Left ventricle myocardium superior (tissue), 1 donor: ENCODE measurements at regions of chr5 and their contacts with region 1.

Region 1: DNA sequence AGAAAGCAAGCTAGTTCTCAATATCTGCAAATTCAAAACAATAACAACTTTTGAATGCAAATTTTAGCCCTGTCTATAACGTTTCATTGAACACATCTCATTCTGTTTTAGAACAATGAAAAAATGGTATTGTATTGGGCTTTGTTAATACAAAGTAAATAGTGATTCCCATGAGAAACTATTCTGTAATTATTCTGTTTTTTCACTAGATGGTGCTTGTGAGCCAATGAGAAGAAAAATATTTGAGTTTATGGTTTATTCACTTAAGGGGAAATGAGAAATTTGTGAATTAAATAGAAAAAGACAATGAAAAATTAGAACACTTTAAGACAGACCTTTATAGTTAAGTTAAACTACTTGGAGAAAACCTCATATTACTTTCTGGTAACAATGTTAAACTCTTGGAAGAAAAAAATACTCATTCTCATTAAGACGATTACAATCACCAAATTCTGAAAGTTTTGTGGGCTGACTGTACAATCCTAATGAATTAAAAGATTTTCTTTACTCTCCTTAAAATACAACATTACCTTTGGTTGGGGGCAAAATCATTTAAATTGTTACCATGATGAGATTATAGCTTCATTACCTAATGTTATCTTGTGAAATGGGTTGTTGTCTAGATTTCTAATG is 127.0 kb downstream of the NNT start:
- DNase-seq: no peak
- ATAC-seq: no peak

Region 2: DNA sequence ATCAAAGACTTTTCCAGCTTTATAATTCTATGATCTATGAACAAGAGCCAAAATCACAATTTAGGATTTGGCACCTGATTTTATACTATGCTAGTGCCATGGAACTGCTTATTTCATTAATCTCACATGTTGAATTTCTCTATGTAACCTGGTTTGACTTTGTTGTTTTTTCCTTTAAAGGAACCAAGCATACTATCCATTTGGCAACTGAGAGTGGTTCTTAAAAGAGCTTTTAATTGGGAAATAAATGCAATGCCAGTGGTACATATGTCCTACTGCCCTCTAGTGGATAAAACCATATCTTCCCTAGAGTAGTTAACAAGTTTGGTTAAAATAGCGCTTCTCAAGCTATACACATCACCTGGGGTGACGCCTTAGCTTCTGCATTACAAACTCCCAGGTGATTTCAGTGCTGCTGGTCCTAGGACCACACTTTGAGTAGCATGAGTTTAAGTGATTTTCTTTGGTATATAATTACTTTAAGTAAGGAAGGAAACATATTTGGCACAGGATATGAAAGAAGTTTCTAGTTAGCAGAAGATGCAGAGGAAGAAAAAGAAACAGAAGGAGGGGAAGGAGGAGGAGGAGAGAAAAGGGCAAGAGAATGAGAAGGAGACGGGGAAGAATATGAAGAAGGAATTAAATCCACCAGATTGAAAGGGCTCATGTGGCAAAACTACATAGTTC is 602.5 kb after region 1 on chr5:
- intact Hi-C with region 1: loop called (anchors 5 kb)
- DNase-seq: no peak
- ATAC-seq: peak; percentile 51

Region 3: GRCh38 chr5:44774279-44774880 is 1044.4 kb after region 1 on chr5:
- intact Hi-C with region 1: loop called (anchors 5 kb)
- DNase-seq: no peak
- ATAC-seq: no peak